ENCODE measurements at regions of chr20 and their contacts with region 1.

Region 1: GRCh38 chr20:50189681-50190582 is 698 bp upstream of the CEBPB start:
- DNase-seq: peak; percentile 93
- ATAC-seq: peak; percentile 60
- H3K4me3 Mint-ChIP-seq: peak overlapping the region; percentile 30
- H3K27ac Mint-ChIP-seq: no peak overlapping the region
- H3K4me1 Mint-ChIP-seq: peaks cover 20% of the 10 kb centered on the region
- H3K27me3 Mint-ChIP-seq: peaks cover 9% of the 10 kb centered on the region

Region 2: GRCh38 chr20:50179507-50180016 is 10.4 kb before region 1 on chr20:
- CTCF ChIA-PET with region 1: interaction called, 13 read pairs
- POLR2A ChIA-PET with region 1: no interaction called
- intact Hi-C with region 1: no loop called
- DNase-seq: no peak
- ATAC-seq: no peak
- H3K4me3 Mint-ChIP-seq: no peak overlapping the region
- H3K27ac Mint-ChIP-seq: no peak overlapping the region
- H3K4me1 Mint-ChIP-seq: no peaks in the 10 kb centered on the region
- H3K27me3 Mint-ChIP-seq: peaks cover 8% of the 10 kb centered on the region

Region 3: DNA sequence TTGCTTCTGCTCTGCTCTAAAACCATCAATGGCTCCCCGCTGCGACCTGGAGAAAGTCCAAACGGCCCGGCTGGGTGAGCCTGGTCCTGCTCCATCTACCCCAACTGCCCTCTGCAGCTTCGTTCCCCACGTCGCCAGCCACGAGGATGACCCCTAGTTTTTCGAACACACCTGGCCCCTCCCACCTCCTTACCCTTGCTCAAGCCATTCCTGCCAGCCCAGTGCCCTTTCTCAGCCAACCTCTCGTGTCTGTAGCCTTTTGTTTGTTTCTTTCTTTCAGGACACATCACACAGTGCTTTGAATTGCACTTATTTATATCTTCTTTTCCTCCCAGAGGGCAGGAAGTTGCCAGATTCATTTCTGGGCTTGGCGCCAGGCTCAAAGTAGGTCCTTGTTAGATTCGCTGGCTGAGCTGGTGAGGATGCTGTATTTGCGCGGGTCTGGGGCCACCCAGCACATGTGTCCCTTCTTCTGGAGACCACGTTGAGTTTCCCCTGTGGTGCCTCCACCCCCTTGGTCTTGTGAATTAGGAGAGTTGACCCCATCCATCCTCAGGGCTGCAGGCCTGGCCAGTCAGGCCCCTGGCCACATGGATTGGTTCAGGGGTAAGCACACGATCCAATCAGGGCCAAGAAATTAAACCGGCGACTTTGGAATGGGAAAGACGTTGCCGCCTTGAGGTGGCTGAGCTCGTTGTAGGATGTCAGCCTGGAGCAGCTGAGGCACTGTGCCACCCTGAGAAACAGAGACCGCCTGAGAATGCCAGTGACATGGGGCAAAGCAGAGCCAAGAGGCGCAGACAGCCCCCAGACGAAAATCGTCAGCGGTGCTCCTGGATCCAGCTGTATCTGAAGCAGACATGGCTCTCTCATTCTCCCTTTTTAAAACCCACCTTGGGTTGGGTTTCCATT is 156.7 kb after region 1 on chr20:
- CTCF ChIA-PET with region 1: no interaction called
- POLR2A ChIA-PET with region 1: no interaction called
- intact Hi-C with region 1: loop called in 1 of 2 experiments (anchors 1 kb)
- DNase-seq: peak; percentile 58
- ATAC-seq: peak; percentile 28
- H3K4me3 Mint-ChIP-seq: no peak overlapping the region
- H3K27ac Mint-ChIP-seq: peak overlapping the region; percentile 59
- H3K4me1 Mint-ChIP-seq: peaks cover 54% of the 10 kb centered on the region
- H3K27me3 Mint-ChIP-seq: no peaks in the 10 kb centered on the region

Region 4: GRCh38 chr20:50509935-50510705 is 320.2 kb after region 1 on chr20 and contains the start of gene PTPN1:
- CTCF ChIA-PET with region 1: interaction called, 4 read pairs
- POLR2A ChIA-PET with region 1: no interaction called
- intact Hi-C with region 1: loop called in 1 of 2 experiments (anchors 1 kb)
- DNase-seq: peak; percentile 99
- ATAC-seq: peak; percentile 93
- H3K4me3 Mint-ChIP-seq: peak within 1 kb of the TSS; percentile 99
- H3K27ac Mint-ChIP-seq: peak within 1 kb of the TSS; percentile 92
- H3K4me1 Mint-ChIP-seq: peaks cover 47% of the 10 kb centered on the region
- H3K27me3 Mint-ChIP-seq: no peaks in the 10 kb centered on the region
- total RNA-seq, gene PTPN1: 79.0 to 92.8 TPM

Region 5: DNA sequence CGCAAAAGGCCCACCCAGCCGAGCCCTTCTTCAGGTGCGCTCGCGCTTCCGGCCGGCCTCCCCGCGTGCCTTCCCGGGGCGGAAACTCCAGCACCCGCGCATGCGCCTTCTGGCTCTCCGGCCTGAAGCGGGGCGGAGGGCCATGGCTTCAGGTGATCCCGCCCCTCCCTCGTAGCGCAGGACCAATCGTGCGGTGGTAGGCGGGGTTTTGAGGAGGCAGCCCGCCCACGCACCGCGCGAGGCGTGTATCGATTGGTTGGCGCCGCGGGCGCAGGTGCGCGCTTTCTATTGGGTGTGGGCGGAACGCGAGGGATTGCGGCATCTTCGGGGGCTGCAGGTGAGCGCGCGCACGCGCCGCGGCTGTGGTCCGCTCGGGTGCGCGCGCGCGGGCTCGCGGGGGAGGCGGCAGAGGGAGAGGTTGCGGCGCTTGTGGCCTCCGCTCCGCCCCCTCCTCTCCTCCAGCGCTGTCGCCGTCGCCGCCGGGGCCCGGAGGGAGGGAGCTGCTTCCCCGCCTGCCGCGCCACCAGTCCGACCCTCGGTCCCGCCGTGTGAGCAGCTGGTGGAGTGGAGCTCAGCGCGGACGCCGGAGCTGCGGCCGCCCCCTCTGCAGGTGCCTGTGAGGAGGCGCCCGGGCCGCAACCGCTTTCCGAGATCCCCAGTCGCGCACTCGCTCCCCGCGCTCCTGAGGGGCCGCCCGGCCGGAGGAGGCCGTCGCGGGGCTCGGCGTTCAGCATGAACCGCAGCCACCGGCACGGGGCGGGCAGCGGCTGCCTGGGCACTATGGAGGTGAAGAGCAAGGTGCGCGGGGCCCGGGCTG is 541.3 kb after region 1 on chr20 and contains the start of gene PARD6B:
- CTCF ChIA-PET with region 1: no interaction called
- POLR2A ChIA-PET with region 1: no interaction called
- intact Hi-C with region 1: loop called (anchors 1 to 10 kb)
- DNase-seq: peak; percentile 100
- ATAC-seq: peak; percentile 92
- H3K4me3 Mint-ChIP-seq: peak within 1 kb of the TSS; percentile 85
- H3K27ac Mint-ChIP-seq: peak within 1 kb of the TSS; percentile 78
- H3K4me1 Mint-ChIP-seq: peaks cover 46% of the 10 kb centered on the region
- H3K27me3 Mint-ChIP-seq: no peaks in the 10 kb centered on the region
- total RNA-seq, gene PARD6B: 4.9 to 6.2 TPM

Measured in activated CD4-positive, alpha-beta T cell treated with anti-CD3 and anti-CD28 coated beads for 36 hours (primary cell).